Naive thymus-derived CD8-positive, alpha-beta T cell (primary cell): ENCODE measurements at regions of chr1 and their contacts with region 1.

Region 1: GRCh38 chr1:150162862-150163706 is 13.4 kb downstream of the PLEKHO1 start:
- DNase-seq: peak in 2 of 10 donors; percentile 19 to 30
- ATAC-seq: peak; percentile 29 to 52
- H3K4me3 Mint-ChIP-seq: peak overlapping the region; percentile 27 to 73 (median 62)
- H3K27ac Mint-ChIP-seq: peak overlapping the region; percentile 13 to 83 (median 66)
- H3K4me1 Mint-ChIP-seq: peaks cover 26 to 80% (median 50%) of the 10 kb centered on the region in 4 donors
- H3K27me3 Mint-ChIP-seq: no peaks in the 10 kb centered on the region

Region 2: GRCh38 chr1:150072959-150073358 is 90.1 kb before region 1 on chr1:
- POLR2A ChIA-PET with region 1: interaction called, 26 read pairs
- DNase-seq: peak in 3 of 10 donors; percentile 41 to 50 (median 47)
- ATAC-seq: peak; percentile 74
- H3K4me3 Mint-ChIP-seq: peak overlapping the region in 1 of 10 donors; percentile 7
- H3K27ac Mint-ChIP-seq: peak overlapping the region in 6 of 10 donors; percentile 2 to 84 (median 30)
- H3K4me1 Mint-ChIP-seq: peaks cover 18 to 33% (median 27%) of the 10 kb centered on the region in 4 donors
- H3K27me3 Mint-ChIP-seq: no peaks in the 10 kb centered on the region

Region 3: GRCh38 chr1:150102986-150103385 is 60.1 kb before region 1 on chr1:
- POLR2A ChIA-PET with region 1: no interaction called
- DNase-seq: no peak
- ATAC-seq: peak in 1 of 2 donors; percentile 62
- H3K4me3 Mint-ChIP-seq: no peak overlapping the region
- H3K27ac Mint-ChIP-seq: peak overlapping the region in 5 of 10 donors; percentile 19 to 91 (median 47)
- H3K4me1 Mint-ChIP-seq: peaks cover 39 to 67% (median 49%) of the 10 kb centered on the region in 4 donors
- H3K27me3 Mint-ChIP-seq: no peaks in the 10 kb centered on the region